OCI-LY7 (cell line): ENCODE measurements at regions of chr7 and their contacts with region 1.

Region 1: GRCh38 chr7:91034459-91035368 is 229.5 kb upstream of the FZD1 start:
- DNase-seq: peak; percentile 61
- H3K4me3 ChIP-seq: no peak overlapping the region
- H3K27ac ChIP-seq: no peak overlapping the region
- H3K4me1 ChIP-seq: peaks cover 2% of the 10 kb centered on the region
- CTCF ChIP-seq: peak; percentile 86

Region 2: GRCh38 chr7:90455163-90456030 is 579.3 kb before region 1 on chr7:
- CTCF ChIA-PET with region 1: no interaction called
- POLR2A ChIA-PET with region 1: no interaction called
- intact Hi-C with region 1: loop called (anchors 5 kb)
- DNase-seq: peak; percentile 33
- H3K4me3 ChIP-seq: no peak overlapping the region
- H3K27ac ChIP-seq: no peak overlapping the region
- H3K4me1 ChIP-seq: no peaks in the 10 kb centered on the region
- CTCF ChIP-seq: peak; percentile 85

Region 3: DNA sequence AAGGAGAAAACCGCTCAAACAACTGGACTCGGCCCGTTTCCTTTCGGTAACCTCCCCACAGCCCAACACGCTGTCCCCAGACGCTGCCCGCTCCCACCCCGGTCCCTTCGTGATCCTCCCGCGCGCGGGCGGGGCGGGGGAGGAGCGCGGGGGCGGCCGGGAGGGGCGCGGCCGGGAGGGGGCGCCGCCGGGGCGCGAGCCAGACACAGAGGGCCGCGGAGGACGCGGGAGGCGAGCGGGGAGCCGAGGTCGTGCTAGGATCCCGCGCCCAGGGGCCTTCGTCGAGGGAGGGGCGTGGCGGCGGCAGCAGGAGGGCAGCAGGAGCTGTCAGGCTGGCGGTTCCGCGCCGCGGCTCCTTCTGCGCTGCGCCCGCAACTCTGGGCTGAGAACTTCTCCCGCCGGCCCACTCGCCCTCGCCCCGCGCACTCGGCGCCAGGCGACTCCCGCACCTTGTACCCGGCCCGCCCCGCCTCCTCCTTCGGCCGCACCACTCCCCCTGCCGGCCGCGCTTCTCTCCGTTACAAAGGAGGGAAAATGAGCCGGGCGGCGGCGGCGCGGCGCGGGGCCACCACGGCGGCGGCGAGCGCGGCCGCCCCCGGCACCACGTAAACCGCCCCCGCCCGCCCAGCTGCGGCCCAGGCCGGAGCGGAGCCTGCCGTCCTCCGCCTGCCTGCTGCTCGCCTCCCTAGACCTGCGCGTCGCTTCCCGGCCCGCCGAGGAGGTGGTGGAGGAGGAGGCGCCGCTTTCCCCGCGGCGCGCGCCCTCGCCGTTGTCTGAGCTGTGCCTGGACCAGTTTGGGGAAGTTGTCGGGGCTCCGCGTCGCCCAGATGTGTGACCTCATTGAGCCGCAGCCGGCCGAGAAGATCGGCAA is 438.7 kb before region 1 on chr7 and contains the start of gene CDK14:
- CTCF ChIA-PET with region 1: no interaction called
- POLR2A ChIA-PET with region 1: no interaction called
- intact Hi-C with region 1: loop called (anchors 5 kb)
- DNase-seq: peak; percentile 61
- H3K4me3 ChIP-seq: peak within 1 kb of the TSS; percentile 71
- H3K27ac ChIP-seq: no peak within 1 kb of the TSS
- H3K4me1 ChIP-seq: peaks cover 3% of the 10 kb centered on the region
- CTCF ChIP-seq: peak; percentile 52
- total RNA-seq, gene CDK14: 90.7 and 112 TPM in 2 replicates

Region 4: DNA sequence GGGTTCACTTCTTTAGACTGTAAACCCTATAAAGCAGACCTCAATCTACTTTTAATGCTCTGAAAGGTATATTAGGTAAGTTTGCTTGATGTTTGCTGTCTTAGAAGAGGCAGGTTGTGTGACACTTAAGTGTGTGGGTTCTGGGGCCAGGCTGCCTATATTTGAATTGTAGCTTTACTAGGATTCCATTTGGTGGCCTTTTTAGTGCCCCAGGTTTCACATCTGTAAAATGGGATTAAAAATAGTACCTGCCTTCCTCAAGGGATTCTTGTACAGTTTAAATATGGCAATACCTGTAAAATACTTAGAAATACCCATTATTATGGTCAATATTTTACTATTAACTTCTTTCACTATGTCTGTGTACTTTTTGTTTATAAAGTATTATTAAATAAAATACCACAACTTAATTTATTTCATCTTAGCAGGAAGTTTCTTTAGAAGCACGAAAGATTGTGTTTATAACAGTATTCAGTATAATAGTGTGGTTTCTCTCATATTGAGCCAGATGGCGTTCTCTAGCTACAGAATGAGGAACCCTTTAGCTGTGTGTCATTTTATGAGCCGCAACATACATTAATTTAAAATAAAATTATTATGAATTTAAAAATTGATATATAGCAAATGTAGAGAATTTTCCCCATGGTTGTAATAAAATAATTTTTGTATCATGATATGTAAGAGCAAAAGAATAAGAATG is 344.4 kb before region 1 on chr7:
- CTCF ChIA-PET with region 1: interaction called, 6 read pairs
- POLR2A ChIA-PET with region 1: interaction called, 3 read pairs
- intact Hi-C with region 1: loop called (anchors 1 kb)
- DNase-seq: peak; percentile 51
- H3K4me3 ChIP-seq: no peak overlapping the region
- H3K27ac ChIP-seq: no peak overlapping the region
- H3K4me1 ChIP-seq: peaks cover 7% of the 10 kb centered on the region
- CTCF ChIP-seq: peak; percentile 75

Region 5: DNA sequence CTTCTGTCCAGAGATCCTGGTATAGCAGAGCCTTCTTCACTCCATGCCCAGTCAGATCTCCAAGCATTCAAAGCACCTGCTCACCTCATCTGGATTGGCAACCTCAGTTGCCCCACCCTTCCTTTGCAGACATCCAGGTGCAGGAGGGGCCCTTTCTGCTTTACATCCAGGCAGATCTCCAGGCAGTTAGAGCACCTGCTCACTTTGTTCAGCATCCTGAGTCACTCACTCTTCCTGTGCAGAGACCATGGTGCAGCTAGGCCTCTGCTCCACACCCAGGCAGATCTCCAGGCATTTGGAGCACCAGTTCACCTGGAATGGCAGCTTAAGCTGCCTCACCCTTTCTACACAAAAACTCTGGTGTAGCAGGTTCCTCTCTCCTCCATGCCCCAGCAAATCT is 285.5 kb before region 1 on chr7:
- CTCF ChIA-PET with region 1: no interaction called
- POLR2A ChIA-PET with region 1: no interaction called
- intact Hi-C with region 1: loop called (anchors 5 kb)
- DNase-seq: peak; percentile 75
- H3K4me3 ChIP-seq: no peak overlapping the region
- H3K27ac ChIP-seq: peak overlapping the region; percentile 61
- H3K4me1 ChIP-seq: peaks cover 73% of the 10 kb centered on the region
- CTCF ChIP-seq: no peak

Region 6: DNA sequence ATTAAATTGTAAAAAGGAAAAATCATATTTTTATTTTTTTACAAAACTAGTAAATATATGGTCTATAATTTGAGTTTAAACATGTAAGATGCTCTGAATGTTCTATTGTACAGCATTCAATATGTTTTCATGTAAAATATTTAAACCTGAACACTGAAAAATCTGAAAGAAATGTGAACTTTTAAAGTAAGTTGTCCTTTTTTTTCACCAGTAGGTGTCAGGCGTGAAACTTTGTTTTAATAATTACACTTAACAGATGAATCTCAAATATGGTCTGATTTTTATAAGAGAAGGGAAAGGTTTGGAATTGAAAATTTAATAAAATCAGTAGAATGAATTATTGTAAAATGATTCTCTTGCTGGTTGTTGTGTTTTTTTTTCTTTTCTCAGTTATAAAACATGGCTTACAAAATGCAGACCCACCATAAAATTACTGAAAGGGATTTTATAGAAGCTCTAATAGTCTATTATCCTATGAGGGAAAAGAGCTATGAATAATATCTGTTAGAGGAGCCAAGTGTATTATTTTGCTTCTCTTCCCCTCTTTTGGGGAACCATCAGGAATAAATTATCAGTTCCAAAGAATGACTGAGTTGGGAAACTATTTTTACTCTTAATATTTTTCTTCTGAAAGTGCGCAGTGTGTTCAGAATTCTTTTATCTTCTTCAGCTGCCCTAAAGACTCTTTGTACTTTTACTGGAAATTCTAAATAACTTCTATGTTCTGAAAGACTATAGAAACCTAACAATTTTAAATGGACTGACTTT is 11.8 kb after region 1 on chr7:
- CTCF ChIA-PET with region 1: no interaction called
- POLR2A ChIA-PET with region 1: no interaction called
- intact Hi-C with region 1: no loop called
- DNase-seq: no peak
- H3K4me3 ChIP-seq: no peak overlapping the region
- H3K27ac ChIP-seq: no peak overlapping the region
- H3K4me1 ChIP-seq: no peaks in the 10 kb centered on the region
- CTCF ChIP-seq: peak; percentile 78